Transverse colon (tissue), 4 donors: ENCODE measurements at regions of chr12 and their contacts with region 1.

Region 1: GRCh38 chr12:51341259-51342007 is 5.0 kb downstream of the CELA1 start:
- DNase-seq: peak; percentile 82
- H3K4me3 ChIP-seq: peak overlapping the region in 1 of 4 donors; percentile 32
- H3K27ac ChIP-seq: peak overlapping the region in 3 of 4 donors; percentile 30 to 54 (median 36)
- H3K4me1 ChIP-seq: peaks cover 0 to 7% (median 0%) of the 10 kb centered on the region in 4 donors
- H3K27me3 ChIP-seq: no peaks in the 10 kb centered on the region
- CTCF ChIP-seq: peak; percentile 96 to 99 (median 98)
- EP300 ChIP-seq: no peak
- POLR2A ChIP-seq: no peak

Region 2: GRCh38 chr12:51070004-51070403 is 271.4 kb before region 1 on chr12:
- in situ Hi-C with region 1: loop called in 2 of 4 experiments (anchors 25 kb)
- intact Hi-C with region 1: no loop called
- DNase-seq: no peak
- H3K4me3 ChIP-seq: no peak overlapping the region
- H3K27ac ChIP-seq: no peak overlapping the region
- H3K4me1 ChIP-seq: no peaks in the 10 kb centered on the region
- H3K27me3 ChIP-seq: no peaks in the 10 kb centered on the region
- CTCF ChIP-seq: no peak
- EP300 ChIP-seq: no peak
- POLR2A ChIP-seq: no peak

Region 3: DNA sequence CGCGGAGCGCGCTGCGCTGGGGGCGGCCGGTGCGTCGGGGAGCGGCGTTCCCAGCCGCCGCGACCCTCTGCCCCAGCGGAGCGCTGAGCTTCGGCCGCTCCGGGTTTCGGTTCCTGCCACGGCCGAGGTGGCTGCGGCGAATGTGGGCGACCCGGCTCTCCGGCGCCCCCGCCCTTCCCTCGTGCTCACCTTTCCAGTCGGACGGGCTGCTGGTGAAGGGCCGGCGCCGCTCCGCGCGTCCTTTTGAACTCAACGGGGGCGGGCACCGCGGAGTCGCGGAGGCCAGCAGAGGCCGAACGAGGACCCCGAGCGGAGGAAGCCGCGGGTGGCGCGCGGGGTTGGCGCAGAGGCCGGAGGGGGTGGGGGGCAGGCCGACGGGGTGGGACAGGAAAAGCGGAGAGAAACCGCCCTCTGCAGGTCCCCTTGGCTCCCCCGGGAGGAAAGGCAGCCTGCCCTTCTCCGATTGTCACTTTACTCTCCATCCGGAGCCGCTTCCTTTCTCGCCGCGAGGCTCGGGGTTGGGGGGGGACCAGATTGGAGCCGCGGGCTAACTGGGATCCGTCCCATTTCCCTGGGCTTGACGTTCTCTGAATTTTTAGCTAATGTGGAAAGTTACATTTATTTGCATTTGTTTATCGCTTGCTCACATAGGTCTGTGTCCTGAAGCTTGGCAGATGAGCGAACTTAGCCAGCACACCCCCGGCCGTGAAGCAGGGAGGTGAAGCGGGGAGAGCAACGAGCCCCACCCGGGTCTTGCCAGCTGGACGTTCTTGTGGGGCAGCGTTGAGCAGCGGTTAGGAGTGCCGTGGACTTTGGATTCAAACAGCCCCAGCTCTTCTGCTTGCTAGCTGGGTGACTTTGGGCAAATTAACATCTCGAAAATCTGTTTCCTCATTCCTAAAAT is 71.1 kb before region 1 on chr12 and contains the start of gene SMAGP:
- in situ Hi-C with region 1: loop called in 3 of 4 experiments (anchors 5 to 10 kb)
- intact Hi-C with region 1: no loop called
- DNase-seq: peak; percentile 89
- H3K4me3 ChIP-seq: peak within 1 kb of the TSS; percentile 55 to 80 (median 66)
- H3K27ac ChIP-seq: peak within 1 kb of the TSS; percentile 89 to 95 (median 92)
- H3K4me1 ChIP-seq: peaks cover 0 to 36% (median 22%) of the 10 kb centered on the region in 4 donors
- H3K27me3 ChIP-seq: peaks cover 4% of the 10 kb centered on the region
- CTCF ChIP-seq: no peak
- EP300 ChIP-seq: peak; percentile 64
- POLR2A ChIP-seq: peak; percentile 73
- total RNA-seq, gene SMAGP: 29.5 to 144 (median 104) TPM